Caco-2 (cell line): ENCODE measurements at regions of chr17 and their contacts with region 1.

Region 1: DNA sequence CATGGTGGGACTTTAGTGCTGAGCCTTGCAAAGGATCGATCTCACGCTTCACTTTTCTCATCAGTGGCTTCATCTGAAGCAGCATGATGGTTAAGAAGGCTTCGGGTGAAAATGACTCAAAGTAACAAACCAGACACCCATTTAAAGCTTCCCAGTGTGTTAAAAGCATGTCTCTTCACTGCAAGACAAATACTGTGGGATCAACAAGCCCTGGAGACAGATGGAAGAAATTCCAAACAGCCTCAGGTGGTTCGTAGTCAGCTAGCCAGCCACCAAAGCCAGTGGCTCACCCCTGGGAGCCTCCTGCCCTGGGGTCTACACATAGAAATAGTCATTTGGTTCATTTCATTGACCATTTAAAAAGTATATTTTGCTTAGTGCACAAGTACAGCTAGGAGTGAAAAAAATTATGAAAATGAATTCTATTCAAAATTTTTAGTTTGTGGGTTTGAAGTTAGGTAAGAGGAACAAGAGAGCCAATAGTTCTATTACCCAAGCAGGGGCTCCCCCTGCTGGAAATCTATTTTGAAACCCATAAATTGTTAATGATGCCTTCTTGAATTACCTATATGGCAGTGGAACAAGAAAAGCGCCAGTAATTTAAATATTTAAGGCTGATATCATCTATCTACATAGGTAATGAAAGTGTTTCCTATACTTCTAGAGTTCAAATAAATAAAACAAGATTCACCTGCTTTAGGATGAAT is 51.6 kb downstream of the PMP22 start:
- DNase-seq: no peak
- H3K4me3 ChIP-seq: no peak overlapping the region
- H3K4me3 Mint-ChIP-seq: no peak overlapping the region
- H3K27ac Mint-ChIP-seq: no peak overlapping the region
- H3K4me1 ChIP-seq: no peaks in the 10 kb centered on the region
- H3K4me1 Mint-ChIP-seq: no peaks in the 10 kb centered on the region
- H3K27me3 ChIP-seq: no peaks in the 10 kb centered on the region
- H3K27me3 Mint-ChIP-seq: no peaks in the 10 kb centered on the region
- CTCF ChIP-seq: no peak

Region 2: DNA sequence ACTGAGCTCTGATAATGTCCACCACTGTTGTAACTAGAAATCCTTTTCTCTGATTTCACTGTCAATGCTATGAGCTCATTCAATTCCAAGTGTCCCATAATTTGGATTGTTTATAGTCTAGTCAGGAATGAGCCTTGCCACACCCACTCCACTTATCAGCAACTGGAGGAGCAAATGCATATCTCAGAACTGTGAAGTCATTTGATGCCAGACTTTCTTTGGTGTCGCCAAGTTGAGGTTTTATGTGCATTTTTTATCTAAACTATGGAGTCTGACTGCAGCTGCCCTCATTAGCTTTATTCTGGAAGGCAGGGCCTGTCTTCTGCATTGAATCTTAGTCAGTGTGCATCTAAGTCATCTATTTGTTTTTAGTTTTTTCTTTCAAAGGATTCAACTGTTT is 309.7 kb before region 1 on chr17:
- CTCF ChIA-PET with region 1: no interaction called
- POLR2A ChIA-PET with region 1: no interaction called
- intact Hi-C with region 1: no loop called
- DNase-seq: no peak
- H3K4me3 ChIP-seq: no peak overlapping the region
- H3K4me3 Mint-ChIP-seq: no peak overlapping the region
- H3K27ac Mint-ChIP-seq: no peak overlapping the region
- H3K4me1 ChIP-seq: no peaks in the 10 kb centered on the region
- H3K4me1 Mint-ChIP-seq: no peaks in the 10 kb centered on the region
- H3K27me3 ChIP-seq: no peaks in the 10 kb centered on the region
- H3K27me3 Mint-ChIP-seq: no peaks in the 10 kb centered on the region
- CTCF ChIP-seq: no peak

Region 3: GRCh38 chr17:15134363-15134762 is 79.2 kb before region 1 on chr17:
- CTCF ChIA-PET with region 1: no interaction called
- POLR2A ChIA-PET with region 1: no interaction called
- intact Hi-C with region 1: no loop called
- DNase-seq: no peak
- H3K4me3 ChIP-seq: no peak overlapping the region
- H3K4me3 Mint-ChIP-seq: no peak overlapping the region
- H3K27ac Mint-ChIP-seq: no peak overlapping the region
- H3K4me1 ChIP-seq: no peaks in the 10 kb centered on the region
- H3K4me1 Mint-ChIP-seq: no peaks in the 10 kb centered on the region
- H3K27me3 ChIP-seq: no peaks in the 10 kb centered on the region
- H3K27me3 Mint-ChIP-seq: peaks cover 7% of the 10 kb centered on the region
- CTCF ChIP-seq: no peak

Region 4: GRCh38 chr17:15185625-15185991 is 27.9 kb before region 1 on chr17:
- CTCF ChIA-PET with region 1: no interaction called
- POLR2A ChIA-PET with region 1: no interaction called
- intact Hi-C with region 1: loop called (anchors 1 kb)
- DNase-seq: no peak
- H3K4me3 ChIP-seq: no peak overlapping the region
- H3K4me3 Mint-ChIP-seq: no peak overlapping the region
- H3K27ac Mint-ChIP-seq: no peak overlapping the region
- H3K4me1 ChIP-seq: no peaks in the 10 kb centered on the region
- H3K4me1 Mint-ChIP-seq: no peaks in the 10 kb centered on the region
- H3K27me3 ChIP-seq: no peaks in the 10 kb centered on the region
- H3K27me3 Mint-ChIP-seq: no peaks in the 10 kb centered on the region
- CTCF ChIP-seq: no peak

Region 5: DNA sequence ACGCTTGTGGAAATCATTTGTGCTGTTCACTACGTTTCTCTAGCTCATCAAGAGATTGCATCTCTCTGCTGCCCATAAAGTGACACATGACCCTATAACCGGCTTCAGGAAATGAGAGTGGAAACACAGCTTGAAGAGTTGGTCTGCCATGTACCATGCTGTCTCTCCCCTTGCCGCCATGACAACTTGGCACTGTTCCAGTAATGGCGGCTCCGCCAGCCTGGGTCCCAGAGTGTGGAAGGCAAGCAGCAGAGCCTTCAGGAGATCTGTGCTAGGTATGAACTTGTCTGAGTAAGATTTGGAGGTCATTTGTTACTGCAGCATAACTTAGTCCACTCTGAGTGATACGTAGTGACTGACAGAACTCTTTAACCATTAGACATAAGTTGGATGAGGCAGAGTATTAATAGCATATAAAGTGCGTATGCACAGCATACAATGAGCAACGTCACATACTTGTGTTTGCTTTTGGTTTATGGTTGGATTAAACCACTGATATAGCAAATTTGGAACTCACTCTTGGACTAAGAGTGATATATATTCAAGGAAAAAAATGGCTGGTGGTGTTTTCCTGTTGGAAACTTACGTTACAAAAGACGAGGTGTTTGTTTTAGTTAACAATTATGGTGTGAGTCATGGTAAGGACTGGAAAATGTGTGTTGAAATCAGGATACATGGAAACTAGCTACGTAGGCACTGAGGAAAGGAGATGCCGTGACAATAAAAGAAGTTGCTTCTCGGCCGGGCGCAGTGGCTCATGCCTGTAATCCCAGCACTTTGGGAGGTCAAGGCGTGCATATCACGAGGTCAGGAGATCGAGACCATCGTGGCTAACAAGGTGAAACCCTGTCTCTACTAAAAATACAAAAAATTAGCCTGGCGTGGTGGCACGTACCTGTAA is 76.0 kb after region 1 on chr17:
- CTCF ChIA-PET with region 1: no interaction called
- POLR2A ChIA-PET with region 1: no interaction called
- intact Hi-C with region 1: no loop called
- DNase-seq: no peak
- H3K4me3 ChIP-seq: no peak overlapping the region
- H3K4me3 Mint-ChIP-seq: no peak overlapping the region
- H3K27ac Mint-ChIP-seq: no peak overlapping the region
- H3K4me1 ChIP-seq: no peaks in the 10 kb centered on the region
- H3K4me1 Mint-ChIP-seq: peaks cover 8% of the 10 kb centered on the region
- H3K27me3 ChIP-seq: no peaks in the 10 kb centered on the region
- H3K27me3 Mint-ChIP-seq: no peaks in the 10 kb centered on the region
- CTCF ChIP-seq: no peak